ENCODE measurements at regions of chr11 and their contacts with region 1.

Region 1: GRCh38 chr11:95764267-95764898 is 25.2 kb downstream of the FAM76B start:
- DNase-seq: no peak
- ATAC-seq: peak; percentile 69
- H3K4me3 Mint-ChIP-seq: no peak overlapping the region
- H3K27ac Mint-ChIP-seq: no peak overlapping the region
- H3K4me1 Mint-ChIP-seq: peaks cover 23% of the 10 kb centered on the region
- H3K27me3 Mint-ChIP-seq: no peaks in the 10 kb centered on the region
- CTCF ChIP-seq: no peak

Region 2: DNA sequence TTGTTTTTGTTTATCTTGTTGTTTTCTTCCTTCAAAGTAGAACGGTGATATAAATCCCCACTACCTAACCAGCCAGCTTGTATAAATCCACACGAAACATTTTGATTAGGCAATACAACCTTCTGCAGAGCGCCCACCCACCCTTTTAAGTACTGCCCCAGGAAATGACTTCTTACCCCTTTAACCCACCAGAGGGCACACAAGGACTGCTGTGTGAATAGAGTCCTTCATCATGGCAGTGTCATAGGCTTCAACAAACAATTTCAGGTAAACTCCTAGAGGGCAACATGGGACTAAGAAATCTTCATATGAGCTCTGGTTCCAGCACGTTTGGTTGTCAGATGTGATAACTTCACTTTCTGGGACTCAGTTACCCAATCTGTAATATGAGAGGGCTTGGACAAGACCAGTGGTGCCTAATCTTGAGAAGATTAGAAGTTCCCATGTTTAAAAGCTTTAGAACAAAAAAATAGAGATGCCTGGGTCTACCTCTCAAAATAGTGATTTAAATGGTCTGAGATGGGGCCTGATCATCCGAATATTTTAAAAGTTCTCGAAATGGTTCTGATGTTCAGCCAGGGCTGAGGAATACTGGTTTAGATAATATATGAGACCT is 1141.2 kb before region 1 on chr11:
- CTCF ChIA-PET with region 1: no interaction called
- POLR2A ChIA-PET with region 1: no interaction called
- intact Hi-C with region 1: loop called (anchors 2 kb)
- DNase-seq: no peak
- ATAC-seq: peak; percentile 58
- H3K4me3 Mint-ChIP-seq: no peak overlapping the region
- H3K27ac Mint-ChIP-seq: no peak overlapping the region
- H3K4me1 Mint-ChIP-seq: no peaks in the 10 kb centered on the region
- H3K27me3 Mint-ChIP-seq: peaks cover 14% of the 10 kb centered on the region
- CTCF ChIP-seq: no peak

Region 3: DNA sequence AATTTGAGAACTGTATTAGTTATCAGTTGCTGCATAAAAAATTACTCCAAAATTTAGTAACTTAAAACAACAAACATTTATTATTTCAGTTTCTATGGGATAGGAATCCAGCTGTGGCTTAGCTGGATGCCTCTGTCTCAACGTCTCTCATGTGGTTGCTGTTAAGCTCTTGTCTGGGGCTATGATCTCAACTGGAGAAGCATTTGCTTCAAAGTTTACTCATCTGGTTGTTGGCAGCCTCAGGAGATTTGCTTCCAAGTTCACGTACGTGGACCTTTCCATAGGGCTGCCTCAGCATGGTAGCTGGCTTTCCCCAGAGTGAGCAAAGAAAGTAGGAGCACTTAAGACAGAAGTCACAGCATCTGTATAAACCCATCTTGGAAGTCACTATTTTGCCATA is 388.5 kb before region 1 on chr11:
- CTCF ChIA-PET with region 1: no interaction called
- POLR2A ChIA-PET with region 1: no interaction called
- intact Hi-C with region 1: loop called (anchors 10 kb)
- DNase-seq: no peak
- ATAC-seq: no peak
- H3K4me3 Mint-ChIP-seq: no peak overlapping the region
- H3K27ac Mint-ChIP-seq: no peak overlapping the region
- H3K4me1 Mint-ChIP-seq: no peaks in the 10 kb centered on the region
- H3K27me3 Mint-ChIP-seq: no peaks in the 10 kb centered on the region
- CTCF ChIP-seq: no peak

Region 4: GRCh38 chr11:95739108-95739938 is 25.1 kb before region 1 on chr11:
- CTCF ChIA-PET with region 1: no interaction called
- POLR2A ChIA-PET with region 1: no interaction called
- intact Hi-C with region 1: no loop called
- DNase-seq: no peak
- ATAC-seq: peak; percentile 21
- H3K4me3 Mint-ChIP-seq: no peak overlapping the region
- H3K27ac Mint-ChIP-seq: no peak overlapping the region
- H3K4me1 Mint-ChIP-seq: peaks cover 12% of the 10 kb centered on the region
- H3K27me3 Mint-ChIP-seq: no peaks in the 10 kb centered on the region
- CTCF ChIP-seq: no peak

Region 5: GRCh38 chr11:95751515-95751914 is 12.9 kb before region 1 on chr11:
- CTCF ChIA-PET with region 1: no interaction called
- POLR2A ChIA-PET with region 1: interaction called, 3 read pairs
- intact Hi-C with region 1: loop called (anchors 2 kb)
- DNase-seq: no peak
- ATAC-seq: no peak
- H3K4me3 Mint-ChIP-seq: no peak overlapping the region
- H3K27ac Mint-ChIP-seq: no peak overlapping the region
- H3K4me1 Mint-ChIP-seq: peaks cover 4% of the 10 kb centered on the region
- H3K27me3 Mint-ChIP-seq: no peaks in the 10 kb centered on the region
- CTCF ChIP-seq: no peak

Region 6: GRCh38 chr11:95778699-95779098 is 14.3 kb after region 1 on chr11:
- CTCF ChIA-PET with region 1: no interaction called
- POLR2A ChIA-PET with region 1: interaction called, 3 read pairs
- intact Hi-C with region 1: loop called (anchors 1 kb)
- DNase-seq: no peak
- ATAC-seq: peak; percentile 64
- H3K4me3 Mint-ChIP-seq: no peak overlapping the region
- H3K27ac Mint-ChIP-seq: peak overlapping the region; percentile 19
- H3K4me1 Mint-ChIP-seq: peaks cover 35% of the 10 kb centered on the region
- H3K27me3 Mint-ChIP-seq: no peaks in the 10 kb centered on the region
- CTCF ChIP-seq: no peak